Cardiac septum (tissue), 1 donor: ENCODE measurements at regions of chr2 and their contacts with region 1.

Region 1: DNA sequence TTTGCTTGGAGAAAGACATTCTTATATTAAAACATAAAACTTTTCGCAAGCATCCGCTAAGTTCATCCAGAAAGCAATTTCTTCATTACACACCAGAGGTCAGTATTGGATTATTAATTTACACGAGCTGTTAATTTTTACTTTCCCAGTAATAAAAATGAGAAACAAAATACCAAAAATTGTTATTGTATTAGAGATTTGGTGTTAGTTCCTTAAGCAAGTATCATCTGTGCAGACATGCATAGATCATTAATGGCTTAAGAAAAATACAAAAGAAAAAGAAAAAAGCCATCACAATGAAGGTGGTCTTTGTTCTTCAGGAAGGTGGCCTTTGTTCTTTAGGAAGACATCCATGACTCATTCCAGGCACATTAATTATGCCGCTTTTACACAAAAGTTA is 53.6 kb upstream of the HNMT start:
- DNase-seq: no peak

Region 2: GRCh38 chr2:137847443-137847842 is 63.2 kb before region 1 on chr2:
- intact Hi-C with region 1: no loop called
- DNase-seq: no peak

Region 3: GRCh38 chr2:138827426-138828054 is 916.9 kb after region 1 on chr2:
- intact Hi-C with region 1: loop called (anchors 5 kb)
- DNase-seq: no peak